Calu3 (cell line): ENCODE measurements at regions of chr12 and their contacts with region 1.

Region 1: DNA sequence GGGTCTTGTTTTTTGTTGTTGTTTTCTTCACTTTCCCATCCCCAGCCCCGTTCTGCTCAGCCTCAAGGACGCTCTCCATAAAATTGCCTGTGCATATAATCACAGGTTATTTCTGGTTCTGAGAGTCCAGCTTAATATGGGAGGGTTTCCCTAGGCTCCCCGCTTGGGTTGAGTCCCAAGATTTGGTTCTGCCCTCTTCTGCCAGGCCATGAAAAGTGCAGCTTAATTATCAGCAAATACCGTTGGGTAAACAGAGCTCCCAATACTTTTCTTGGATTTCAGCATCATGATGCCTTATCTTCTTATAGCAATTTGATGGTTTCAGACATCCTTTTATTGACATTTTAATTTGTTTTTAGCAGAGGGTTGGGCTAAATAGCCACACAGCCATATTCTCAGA is 75.6 kb downstream of the GRIN2B start:
- DNase-seq: peak; percentile 4
- H3K4me3 Mint-ChIP-seq: no peak overlapping the region
- H3K27ac Mint-ChIP-seq: no peak overlapping the region
- H3K4me1 Mint-ChIP-seq: no peaks in the 10 kb centered on the region
- H3K27me3 Mint-ChIP-seq: peaks cover 30% of the 10 kb centered on the region
- CTCF ChIP-seq: no peak

Region 2: DNA sequence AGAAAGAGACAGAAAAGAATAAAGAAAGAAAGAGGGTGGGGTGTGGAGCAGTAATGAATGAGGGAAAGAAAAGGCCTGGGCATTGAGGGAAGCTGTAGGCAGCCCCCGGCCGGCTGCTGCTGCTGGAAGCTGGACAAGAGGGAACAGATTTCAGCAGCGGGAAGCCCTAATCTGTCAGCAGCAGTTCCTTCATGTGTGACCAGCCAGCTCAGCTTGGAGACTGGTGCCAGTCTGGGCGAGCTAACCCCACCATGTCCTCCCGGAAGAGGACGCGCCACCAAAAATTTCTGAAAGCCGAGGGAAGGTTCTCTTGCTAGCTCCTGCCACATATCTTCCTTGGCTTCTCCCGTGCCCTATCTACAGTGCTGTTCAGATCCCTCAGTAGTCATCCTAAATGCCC is 161.2 kb before region 1 on chr12:
- CTCF ChIA-PET with region 1: no interaction called
- intact Hi-C with region 1: loop called (anchors 5 kb)
- DNase-seq: no peak
- H3K4me3 Mint-ChIP-seq: no peak overlapping the region
- H3K27ac Mint-ChIP-seq: no peak overlapping the region
- H3K4me1 Mint-ChIP-seq: no peaks in the 10 kb centered on the region
- H3K27me3 Mint-ChIP-seq: peaks cover 28% of the 10 kb centered on the region
- CTCF ChIP-seq: no peak

Region 3: GRCh38 chr12:13864081-13864673 is 41.6 kb before region 1 on chr12:
- CTCF ChIA-PET with region 1: interaction called, 11 read pairs
- intact Hi-C with region 1: loop called (anchors 2 kb)
- DNase-seq: peak; percentile 77
- H3K4me3 Mint-ChIP-seq: no peak overlapping the region
- H3K27ac Mint-ChIP-seq: no peak overlapping the region
- H3K4me1 Mint-ChIP-seq: no peaks in the 10 kb centered on the region
- H3K27me3 Mint-ChIP-seq: peaks cover 84% of the 10 kb centered on the region
- CTCF ChIP-seq: peak; percentile 81